ENCODE measurements at regions of chr1 and their contacts with region 1.

Region 1: DNA sequence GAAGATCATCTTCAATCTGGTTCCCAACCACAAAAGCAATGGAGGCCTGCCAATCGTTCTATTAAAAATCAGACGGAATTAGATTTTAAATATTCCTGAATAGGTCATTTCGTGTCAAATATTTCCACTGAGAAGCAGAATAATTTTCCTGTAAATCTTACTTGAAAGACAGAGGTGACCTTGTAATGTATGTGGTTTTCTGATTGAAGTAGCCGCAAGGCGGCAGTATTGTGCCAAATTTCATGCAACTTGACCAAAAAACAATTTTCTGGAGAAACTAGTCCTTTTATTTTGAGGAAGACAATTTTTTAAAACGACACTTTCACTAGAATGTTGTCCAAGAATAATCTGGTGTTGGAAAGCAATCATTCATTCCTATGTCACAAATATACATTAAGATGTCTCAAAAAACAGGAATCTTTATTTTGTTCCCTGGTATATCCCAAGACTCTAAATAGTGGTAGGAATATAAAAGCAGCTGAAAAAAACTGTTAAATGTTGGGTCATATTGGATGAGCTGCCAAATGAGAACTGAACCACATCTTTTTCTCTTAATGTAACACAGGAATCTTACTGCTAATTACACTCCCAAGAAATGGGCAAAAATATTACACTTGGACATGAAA is 33.6 kb downstream of the SPAG17 start:
- DNase-seq: peak; percentile 56
- H3K4me3 Mint-ChIP-seq: no peak overlapping the region
- H3K27ac Mint-ChIP-seq: no peak overlapping the region
- H3K4me1 Mint-ChIP-seq: no peaks in the 10 kb centered on the region
- H3K27me3 Mint-ChIP-seq: no peaks in the 10 kb centered on the region

Region 2: GRCh38 chr1:117644696-117645311 is 506.6 kb before region 1 on chr1:
- CTCF ChIA-PET with region 1: no interaction called
- DNase-seq: no peak
- H3K4me3 Mint-ChIP-seq: no peak overlapping the region
- H3K27ac Mint-ChIP-seq: no peak overlapping the region
- H3K4me1 Mint-ChIP-seq: peaks cover 17% of the 10 kb centered on the region
- H3K27me3 Mint-ChIP-seq: peaks cover 33% of the 10 kb centered on the region

Region 3: DNA sequence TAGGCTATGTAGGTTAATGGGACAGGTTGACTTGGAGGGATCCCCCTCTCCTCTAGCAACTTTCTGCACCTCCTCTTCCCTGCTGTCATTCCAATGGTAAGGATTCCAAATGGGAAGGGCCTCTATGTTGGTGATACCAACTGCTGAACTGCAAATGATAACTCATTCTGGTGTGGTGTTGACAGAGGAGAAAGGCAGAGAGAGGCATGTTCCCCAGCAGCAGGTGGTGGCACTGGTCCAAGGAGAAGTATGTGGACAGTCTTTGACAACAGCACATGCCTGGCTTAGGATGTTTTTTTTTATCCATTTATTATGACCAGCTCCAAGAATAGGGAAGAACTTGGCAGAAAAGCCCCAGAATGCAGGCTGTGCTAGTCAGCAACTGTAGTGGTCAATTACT is 53.2 kb after region 1 on chr1:
- CTCF ChIA-PET with region 1: no interaction called
- DNase-seq: no peak
- H3K4me3 Mint-ChIP-seq: no peak overlapping the region
- H3K27ac Mint-ChIP-seq: no peak overlapping the region
- H3K4me1 Mint-ChIP-seq: no peaks in the 10 kb centered on the region
- H3K27me3 Mint-ChIP-seq: no peaks in the 10 kb centered on the region

Region 4: DNA sequence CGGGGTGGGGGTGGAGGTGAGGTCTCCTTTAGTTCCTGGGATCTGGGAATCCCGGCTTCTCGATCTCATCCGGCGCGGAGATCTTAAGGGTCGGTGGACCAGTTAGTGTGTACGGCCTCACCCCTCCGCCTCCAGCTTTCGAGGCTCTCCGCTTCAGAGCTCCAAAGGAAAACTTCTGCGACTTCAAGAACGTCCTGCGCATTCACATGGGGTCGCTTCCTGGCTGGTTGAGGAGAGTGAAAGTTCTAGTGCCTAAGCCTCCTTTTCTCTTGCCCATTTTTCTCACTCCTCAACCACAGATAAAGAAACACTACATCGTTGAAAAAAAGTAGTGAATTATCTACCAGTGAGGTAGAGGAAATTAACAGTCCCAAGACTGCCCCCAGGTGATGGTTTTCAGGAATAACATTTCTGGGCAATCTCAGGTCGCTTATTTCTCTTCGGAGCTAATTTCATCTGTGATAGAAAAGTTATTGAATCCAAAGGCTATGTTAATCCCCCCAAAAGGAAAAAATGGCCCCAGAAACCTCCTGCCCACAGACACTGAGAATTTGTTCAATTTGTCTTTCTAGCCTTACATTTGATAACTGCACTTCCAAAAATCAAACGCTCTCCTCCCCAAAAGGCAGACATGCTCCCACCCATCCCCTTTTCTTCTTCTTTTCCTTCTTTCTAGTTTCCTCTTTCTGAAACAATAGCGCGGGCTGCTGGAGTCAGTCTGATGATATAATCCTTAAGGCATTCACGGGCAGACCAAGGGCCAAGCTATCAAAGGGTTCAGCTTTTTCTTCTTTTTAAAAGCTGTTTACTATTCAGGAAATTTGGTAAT is 857.3 kb after region 1 on chr1:
- CTCF ChIA-PET with region 1: interaction called, 10 read pairs
- DNase-seq: no peak
- H3K4me3 Mint-ChIP-seq: peak overlapping the region; percentile 14
- H3K27ac Mint-ChIP-seq: peak overlapping the region; percentile 86
- H3K4me1 Mint-ChIP-seq: peaks cover 7% of the 10 kb centered on the region
- H3K27me3 Mint-ChIP-seq: peaks cover 55% of the 10 kb centered on the region